Natural killer cell (primary cell): ENCODE measurements at regions of chr15 and their contacts with region 1.

Region 1: GRCh38 chr15:65818927-65819562 is 27.0 kb upstream of the DENND4A start:
- DNase-seq: peak in 1 of 2 donors; percentile 90
- ATAC-seq: peak; percentile 82 to 93 (median 93)
- H3K4me3 ChIP-seq: peak overlapping the region; percentile 12
- H3K4me3 Mint-ChIP-seq: peak overlapping the region; percentile 89
- H3K27ac ChIP-seq: peak overlapping the region; percentile 96
- H3K27ac Mint-ChIP-seq: peak overlapping the region; percentile 96 to 100
- H3K4me1 ChIP-seq: peaks cover 49% of the 10 kb centered on the region
- H3K4me1 Mint-ChIP-seq: peaks cover 49% of the 10 kb centered on the region in 2 donors
- H3K27me3 ChIP-seq: no peaks in the 10 kb centered on the region
- H3K27me3 Mint-ChIP-seq: no peaks in the 10 kb centered on the region
- CTCF ChIP-seq: no peak

Region 2: GRCh38 chr15:65757256-65757655 is 61.8 kb before region 1 on chr15:
- intact Hi-C with region 1: no loop called
- DNase-seq: no peak
- ATAC-seq: no peak
- H3K4me3 ChIP-seq: no peak overlapping the region
- H3K4me3 Mint-ChIP-seq: no peak overlapping the region
- H3K27ac ChIP-seq: no peak overlapping the region
- H3K27ac Mint-ChIP-seq: no peak overlapping the region
- H3K4me1 ChIP-seq: peaks cover 15% of the 10 kb centered on the region
- H3K4me1 Mint-ChIP-seq: peaks cover 15 to 22% of the 10 kb centered on the region in 2 donors
- H3K27me3 ChIP-seq: no peaks in the 10 kb centered on the region
- H3K27me3 Mint-ChIP-seq: no peaks in the 10 kb centered on the region
- CTCF ChIP-seq: no peak

Region 3: GRCh38 chr15:65804252-65804931 is 14.7 kb before region 1 on chr15:
- intact Hi-C with region 1: loop called (anchors 1 kb)
- DNase-seq: no peak
- ATAC-seq: peak; percentile 55 to 75 (median 58)
- H3K4me3 ChIP-seq: no peak overlapping the region
- H3K4me3 Mint-ChIP-seq: no peak overlapping the region
- H3K27ac ChIP-seq: peak overlapping the region; percentile 66
- H3K27ac Mint-ChIP-seq: peak overlapping the region; percentile 81 to 95
- H3K4me1 ChIP-seq: peaks cover 31% of the 10 kb centered on the region
- H3K4me1 Mint-ChIP-seq: peaks cover 33 to 35% of the 10 kb centered on the region in 2 donors
- H3K27me3 ChIP-seq: no peaks in the 10 kb centered on the region
- H3K27me3 Mint-ChIP-seq: no peaks in the 10 kb centered on the region
- CTCF ChIP-seq: no peak

Region 4: DNA sequence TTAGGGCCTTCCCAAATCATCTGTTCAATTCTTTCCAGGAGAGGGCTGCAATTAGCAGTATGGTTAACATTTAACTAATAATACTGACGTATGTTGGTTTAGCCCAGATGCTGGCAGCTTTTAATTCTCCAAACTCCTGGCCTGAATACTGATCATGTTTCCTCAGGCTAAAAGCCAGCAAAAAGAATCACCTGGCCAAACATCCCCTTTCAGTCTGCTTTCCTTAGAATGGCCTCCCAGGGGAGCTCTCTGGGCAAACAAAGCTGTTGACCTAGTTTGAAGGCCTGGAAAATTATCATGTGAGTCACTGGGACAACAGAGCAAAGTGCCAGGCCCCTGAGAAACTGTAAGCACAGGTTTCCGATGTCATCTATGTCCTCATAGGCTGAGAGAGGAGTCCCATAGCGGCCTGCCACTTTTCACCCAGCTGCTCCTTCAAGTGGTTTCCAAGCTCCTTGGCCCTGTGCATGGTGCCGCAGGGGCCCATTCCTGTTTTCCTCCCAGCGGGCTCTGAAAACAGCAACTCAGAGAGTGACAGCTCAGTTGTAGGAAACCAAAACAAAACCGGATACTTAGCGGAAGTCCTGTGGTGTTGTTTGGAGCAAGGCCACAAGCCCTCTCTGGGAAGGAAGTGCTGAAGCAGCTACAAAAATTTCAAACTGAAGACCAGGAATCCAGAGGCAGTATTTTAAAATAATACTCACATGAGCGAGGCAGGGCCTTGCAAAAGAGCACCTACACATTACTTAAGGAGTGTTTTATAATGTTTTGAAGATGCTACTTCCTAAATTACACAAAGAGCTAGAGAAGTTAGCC is 13.7 kb after region 1 on chr15:
- intact Hi-C with region 1: loop called (anchors 2 kb)
- DNase-seq: peak; percentile 41 to 78
- ATAC-seq: peak; percentile 71 to 76 (median 75)
- H3K4me3 ChIP-seq: no peak overlapping the region
- H3K4me3 Mint-ChIP-seq: peak overlapping the region; percentile 86
- H3K27ac ChIP-seq: peak overlapping the region; percentile 87
- H3K27ac Mint-ChIP-seq: peak overlapping the region; percentile 97 to 98
- H3K4me1 ChIP-seq: peaks cover 51% of the 10 kb centered on the region
- H3K4me1 Mint-ChIP-seq: peaks cover 44 to 52% of the 10 kb centered on the region in 2 donors
- H3K27me3 ChIP-seq: no peaks in the 10 kb centered on the region
- H3K27me3 Mint-ChIP-seq: no peaks in the 10 kb centered on the region
- CTCF ChIP-seq: no peak

Region 5: GRCh38 chr15:65856821-65857455 is 37.9 kb after region 1 on chr15:
- intact Hi-C with region 1: loop called (anchors 1 kb)
- DNase-seq: peak; percentile 55 to 93
- ATAC-seq: peak; percentile 37 to 71 (median 70)
- H3K4me3 ChIP-seq: no peak overlapping the region
- H3K4me3 Mint-ChIP-seq: no peak overlapping the region
- H3K27ac ChIP-seq: no peak overlapping the region
- H3K27ac Mint-ChIP-seq: peak overlapping the region in 1 of 2 donors; percentile 32
- H3K4me1 ChIP-seq: peaks cover 7% of the 10 kb centered on the region
- H3K4me1 Mint-ChIP-seq: peaks cover 19 to 24% of the 10 kb centered on the region in 2 donors
- H3K27me3 ChIP-seq: no peaks in the 10 kb centered on the region
- H3K27me3 Mint-ChIP-seq: no peaks in the 10 kb centered on the region
- CTCF ChIP-seq: peak; percentile 86

Region 6: DNA sequence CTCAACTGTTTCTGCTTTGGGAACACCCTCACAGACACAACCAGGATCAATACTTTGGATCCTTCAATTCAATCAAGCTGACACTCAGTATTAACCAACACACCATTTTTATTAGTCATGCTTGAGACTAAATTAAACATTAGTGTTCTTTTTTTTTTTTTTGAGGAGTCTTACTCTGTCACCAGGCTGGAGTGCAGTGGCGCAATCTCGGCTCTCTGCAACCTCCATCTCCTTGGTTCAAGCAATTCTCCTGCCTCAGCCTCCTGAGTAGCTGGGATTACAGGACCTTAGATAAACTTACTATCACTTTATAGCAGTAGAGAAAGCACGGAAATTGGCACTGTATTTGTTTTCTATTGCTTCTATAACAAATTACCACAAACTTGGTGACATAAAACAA is 48.2 kb after region 1 on chr15:
- intact Hi-C with region 1: no loop called
- DNase-seq: no peak
- ATAC-seq: no peak
- H3K4me3 ChIP-seq: no peak overlapping the region
- H3K4me3 Mint-ChIP-seq: no peak overlapping the region
- H3K27ac ChIP-seq: no peak overlapping the region
- H3K27ac Mint-ChIP-seq: no peak overlapping the region
- H3K4me1 ChIP-seq: peaks cover 14% of the 10 kb centered on the region
- H3K4me1 Mint-ChIP-seq: peaks cover 25 to 39% of the 10 kb centered on the region in 2 donors
- H3K27me3 ChIP-seq: no peaks in the 10 kb centered on the region
- H3K27me3 Mint-ChIP-seq: no peaks in the 10 kb centered on the region
- CTCF ChIP-seq: no peak